ENCODE measurements at regions of chr10 and their contacts with region 1.

Region 1: DNA sequence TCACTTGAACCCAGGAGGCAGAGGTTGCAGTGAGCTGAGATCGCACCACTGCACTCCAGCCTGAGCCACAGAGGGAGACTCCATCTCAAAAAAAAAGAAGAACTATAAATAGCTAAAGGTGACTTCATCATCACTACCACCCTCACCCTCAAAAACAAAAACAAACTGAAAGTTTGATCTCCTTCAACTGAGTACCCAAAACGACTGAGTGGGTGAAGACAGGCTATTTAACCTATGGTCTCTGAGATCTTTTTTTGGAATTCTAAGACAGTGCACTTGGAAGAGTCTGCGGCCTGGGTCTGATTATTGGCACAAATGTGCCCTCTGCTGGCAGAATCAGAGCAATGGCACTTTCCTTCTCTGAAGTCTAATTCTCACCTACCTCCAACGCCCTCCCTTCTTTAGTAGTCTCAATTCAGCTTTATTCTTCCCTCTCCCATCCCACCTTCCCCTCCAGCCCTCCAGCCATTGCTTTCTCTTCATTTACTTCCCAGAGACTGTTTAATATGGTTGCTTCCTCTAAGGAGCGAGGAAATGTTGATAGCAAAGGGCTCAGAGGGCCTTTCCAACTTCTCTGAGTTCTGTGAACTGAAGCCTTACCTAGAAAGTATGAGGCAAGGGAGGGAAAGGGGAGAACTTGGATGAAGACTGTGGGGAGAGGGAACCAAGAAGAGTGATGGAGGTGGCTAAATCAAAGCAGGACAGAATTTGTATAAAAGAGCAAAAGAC is 2.9 kb upstream of the MYOZ1 start:
- DNase-seq: peak in 1 of 2 experiments; percentile 63
- H3K4me3 ChIP-seq: no peak overlapping the region
- H3K27ac ChIP-seq: no peak overlapping the region
- H3K4me1 ChIP-seq: peaks cover 0 to 15% (median 9%) of the 10 kb centered on the region in 4 experiments; a peak in 6 of 7 replicates
- H3K27me3 ChIP-seq: no peaks in the 10 kb centered on the region
- CTCF ChIP-seq: peak; percentile 43 to 84 (median 83)
- EP300 ChIP-seq: no peak
- POLR2A ChIP-seq: no peak
- RAD21 ChIP-seq: peak; percentile 96 to 97

Region 2: GRCh38 chr10:73076360-73077183 is 567.6 kb before region 1 on chr10:
- CTCF ChIA-PET with region 1: no interaction called
- POLR2A ChIA-PET with region 1: no interaction called
- DNase-seq: no peak
- H3K4me3 ChIP-seq: no peak overlapping the region
- H3K27ac ChIP-seq: no peak overlapping the region
- H3K4me1 ChIP-seq: no peaks in the 10 kb centered on the region
- H3K27me3 ChIP-seq: no peaks in the 10 kb centered on the region
- CTCF ChIP-seq: no peak
- EP300 ChIP-seq: no peak
- POLR2A ChIP-seq: no peak
- RAD21 ChIP-seq: no peak

Region 3: GRCh38 chr10:73517271-73517877 is 126.8 kb before region 1 on chr10:
- CTCF ChIA-PET with region 1: interaction called, 13 read pairs
- POLR2A ChIA-PET with region 1: no interaction called
- DNase-seq: no peak
- H3K4me3 ChIP-seq: no peak overlapping the region
- H3K27ac ChIP-seq: no peak overlapping the region
- H3K4me1 ChIP-seq: no peaks in the 10 kb centered on the region
- H3K27me3 ChIP-seq: no peaks in the 10 kb centered on the region
- CTCF ChIP-seq: no peak
- EP300 ChIP-seq: no peak
- POLR2A ChIP-seq: no peak
- RAD21 ChIP-seq: no peak

Region 4: DNA sequence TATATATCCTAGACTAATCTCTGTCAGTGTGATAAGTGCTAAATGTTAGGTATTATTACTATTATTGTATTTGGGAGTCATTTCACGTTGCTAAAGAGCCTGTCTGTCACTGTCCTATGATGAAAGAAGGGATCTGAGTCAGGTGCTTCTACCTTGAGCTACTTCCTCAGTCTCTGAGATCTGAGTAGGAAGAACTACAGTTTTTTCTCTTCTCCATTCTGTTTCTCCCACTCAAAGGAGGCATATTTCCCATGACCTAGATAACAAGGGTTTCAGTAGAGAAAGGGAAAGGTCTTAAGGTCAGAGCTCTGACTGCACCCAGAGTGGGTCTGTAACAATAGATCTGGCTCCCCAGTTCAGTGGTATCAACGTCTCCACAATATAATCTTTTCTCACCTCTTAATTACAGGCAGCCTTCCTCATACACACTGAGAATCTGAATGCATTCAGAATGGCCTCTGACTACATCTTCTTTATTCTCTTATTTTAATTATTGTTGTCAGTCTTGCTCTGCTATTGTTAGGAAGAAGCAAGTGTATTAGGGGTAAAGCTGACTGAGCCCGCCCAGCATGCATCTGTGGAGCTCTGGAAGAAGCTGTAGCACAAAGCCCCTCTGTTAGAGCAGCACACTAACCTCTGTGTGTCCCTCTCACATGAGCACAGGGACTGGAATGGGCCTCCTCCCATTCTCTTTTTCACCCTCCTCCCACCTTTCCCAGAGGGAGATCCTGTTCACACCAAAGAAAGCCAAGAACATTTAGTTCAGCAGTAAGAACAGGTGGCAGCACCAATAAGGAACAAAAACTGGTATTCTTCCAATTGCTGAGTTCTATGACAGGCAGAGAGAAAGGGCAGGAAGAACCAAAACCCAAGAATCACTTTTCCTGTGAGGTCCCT is 91.1 kb before region 1 on chr10:
- CTCF ChIA-PET with region 1: interaction called, 27 read pairs
- POLR2A ChIA-PET with region 1: no interaction called
- DNase-seq: no peak
- H3K4me3 ChIP-seq: no peak overlapping the region
- H3K27ac ChIP-seq: no peak overlapping the region
- H3K4me1 ChIP-seq: no peaks in the 10 kb centered on the region
- H3K27me3 ChIP-seq: no peaks in the 10 kb centered on the region
- CTCF ChIP-seq: no peak
- EP300 ChIP-seq: no peak
- POLR2A ChIP-seq: no peak
- RAD21 ChIP-seq: no peak

Region 5: GRCh38 chr10:73591935-73592699 is 52.1 kb before region 1 on chr10:
- CTCF ChIA-PET with region 1: interaction called, 6 read pairs
- POLR2A ChIA-PET with region 1: interaction called, 13 read pairs
- DNase-seq: peak in 1 of 2 experiments; percentile 66
- H3K4me3 ChIP-seq: peak overlapping the region in 3 of 4 experiments; percentile 20 to 52 (median 34); a peak in 5 of 8 replicates
- H3K27ac ChIP-seq: peak overlapping the region; percentile 82; the same call in 1 of the 2 replicates
- H3K4me1 ChIP-seq: peaks cover 0 to 22% (median 4%) of the 10 kb centered on the region in 4 experiments; a peak in 2 of 7 replicates
- H3K27me3 ChIP-seq: no peaks in the 10 kb centered on the region
- CTCF ChIP-seq: no peak
- EP300 ChIP-seq: no peak
- POLR2A ChIP-seq: peak; percentile 27 to 73
- RAD21 ChIP-seq: no peak

Region 6: DNA sequence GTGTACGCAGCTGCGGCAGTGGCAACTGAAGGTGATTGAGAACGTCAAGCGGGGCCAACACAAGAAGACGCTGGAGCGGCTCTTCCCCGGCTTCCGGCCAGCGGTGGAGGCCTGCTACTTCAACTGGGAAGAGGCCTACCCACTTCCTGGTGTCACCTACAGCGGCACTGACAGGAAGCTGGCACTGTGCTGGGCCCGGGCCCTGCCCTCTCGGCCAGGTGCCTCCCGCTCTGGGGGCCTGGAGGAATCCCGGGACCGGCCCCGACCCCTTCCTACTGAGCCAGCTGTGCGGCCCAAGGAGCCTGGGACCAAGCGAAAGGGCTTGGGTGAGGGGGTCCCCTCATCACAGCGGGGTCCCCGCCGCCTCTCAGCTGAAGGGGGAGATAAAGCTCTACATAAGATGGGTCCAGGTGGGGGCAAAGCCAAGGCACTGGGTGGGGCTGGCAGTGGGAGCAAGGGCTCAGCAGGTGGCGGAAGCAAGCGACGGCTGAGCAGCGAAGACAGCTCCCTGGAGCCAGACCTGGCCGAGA is 147.8 kb after region 1 on chr10:
- CTCF ChIA-PET with region 1: no interaction called
- POLR2A ChIA-PET with region 1: no interaction called
- DNase-seq: no peak
- H3K4me3 ChIP-seq: no peak overlapping the region
- H3K27ac ChIP-seq: no peak overlapping the region
- H3K4me1 ChIP-seq: no peaks in the 10 kb centered on the region
- H3K27me3 ChIP-seq: no peaks in the 10 kb centered on the region
- CTCF ChIP-seq: no peak
- EP300 ChIP-seq: no peak
- POLR2A ChIP-seq: no peak
- RAD21 ChIP-seq: no peak

Region 7: GRCh38 chr10:73810735-73811465 is 166.7 kb after region 1 on chr10:
- CTCF ChIA-PET with region 1: no interaction called
- POLR2A ChIA-PET with region 1: no interaction called
- DNase-seq: peak in 1 of 2 experiments; percentile 75
- H3K4me3 ChIP-seq: peak overlapping the region; percentile 69 to 91 (median 78)
- H3K27ac ChIP-seq: no peak overlapping the region
- H3K4me1 ChIP-seq: peaks cover 0 to 4% (median 2%) of the 10 kb centered on the region in 4 experiments; a peak in 4 of 7 replicates
- H3K27me3 ChIP-seq: no peaks in the 10 kb centered on the region
- CTCF ChIP-seq: no peak
- EP300 ChIP-seq: no peak
- POLR2A ChIP-seq: no peak
- RAD21 ChIP-seq: no peak